Left colon (tissue), 2 donors: ENCODE measurements at regions of chr11 and their contacts with region 1.

Region 1: DNA sequence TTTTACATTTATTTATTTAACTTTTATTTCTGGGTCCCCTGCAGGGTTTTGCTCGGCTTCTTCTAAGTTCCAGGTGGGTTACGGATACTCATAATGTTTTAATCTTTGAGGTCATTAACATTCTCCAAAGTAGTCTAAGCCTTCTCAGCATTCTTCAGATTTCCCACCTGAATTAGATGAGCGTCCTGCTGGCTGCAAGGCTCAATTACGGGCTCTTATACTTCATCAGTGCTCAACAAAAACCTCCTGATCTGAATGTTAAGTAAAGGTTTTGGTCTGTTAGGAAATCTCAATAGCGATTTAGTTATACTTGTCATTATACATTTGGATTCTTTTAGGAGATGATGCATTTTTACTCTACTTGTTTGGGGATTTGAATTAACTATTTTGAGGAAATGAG is 27.3 kb upstream of the NFRKB start:
- DNase-seq: no peak
- ATAC-seq: no peak

Region 2: DNA sequence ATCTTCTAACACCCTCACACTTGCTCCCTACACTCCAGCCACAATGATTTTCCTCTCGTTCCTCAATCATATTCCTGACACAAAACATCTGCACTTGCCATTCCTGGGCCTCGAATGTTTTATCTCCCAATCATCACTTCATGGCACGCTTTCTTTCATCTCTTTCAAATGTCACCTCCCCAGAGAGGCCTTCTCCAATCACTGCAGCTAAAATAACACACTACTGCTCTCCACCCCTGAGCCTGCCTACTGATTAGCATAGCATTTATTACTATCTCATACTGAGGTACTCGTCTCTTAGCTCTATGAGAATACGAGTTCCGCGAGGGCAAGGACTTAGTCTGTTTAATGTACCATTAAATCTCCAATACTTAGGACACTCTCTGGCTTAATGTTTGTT is 50.8 kb before region 1 on chr11:
- intact Hi-C with region 1: no loop called
- DNase-seq: no peak
- ATAC-seq: no peak

Region 3: GRCh38 chr11:129937592-129938238 is 15.0 kb after region 1 on chr11:
- intact Hi-C with region 1: no loop called
- DNase-seq: no peak
- ATAC-seq: no peak

Region 4: DNA sequence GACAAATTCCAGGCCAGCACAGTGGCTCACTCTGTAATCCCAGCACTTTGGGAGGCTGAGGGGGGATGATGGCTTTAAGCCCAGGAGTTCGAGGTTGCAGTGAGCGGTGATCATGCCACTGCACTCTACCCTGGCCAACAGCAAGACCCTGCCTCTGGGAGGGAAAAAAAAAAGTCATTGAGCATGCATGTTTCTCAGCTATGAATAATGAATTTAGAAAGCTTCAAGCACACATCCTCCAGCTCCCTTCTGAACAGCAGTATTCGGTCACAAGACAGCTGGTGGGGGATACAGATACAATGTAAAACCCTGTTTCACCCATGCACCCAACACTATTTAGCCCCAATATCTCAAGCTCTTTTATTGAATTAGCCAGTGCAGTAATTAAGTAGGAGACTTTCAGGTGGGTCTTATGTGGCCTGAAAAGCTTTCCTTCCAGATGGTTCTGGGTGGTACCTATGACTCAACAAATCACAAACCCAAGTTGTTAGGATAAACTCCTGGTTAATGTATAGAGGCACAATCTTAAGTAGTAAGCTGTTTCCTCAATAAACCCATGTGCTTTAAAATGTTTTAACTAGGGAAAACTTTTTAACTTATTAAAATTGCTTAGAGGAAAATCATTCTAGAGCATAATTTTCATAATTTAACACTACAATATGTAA is 66.6 kb after region 1 on chr11:
- intact Hi-C with region 1: no loop called
- DNase-seq: no peak
- ATAC-seq: peak; percentile 69

Region 5: DNA sequence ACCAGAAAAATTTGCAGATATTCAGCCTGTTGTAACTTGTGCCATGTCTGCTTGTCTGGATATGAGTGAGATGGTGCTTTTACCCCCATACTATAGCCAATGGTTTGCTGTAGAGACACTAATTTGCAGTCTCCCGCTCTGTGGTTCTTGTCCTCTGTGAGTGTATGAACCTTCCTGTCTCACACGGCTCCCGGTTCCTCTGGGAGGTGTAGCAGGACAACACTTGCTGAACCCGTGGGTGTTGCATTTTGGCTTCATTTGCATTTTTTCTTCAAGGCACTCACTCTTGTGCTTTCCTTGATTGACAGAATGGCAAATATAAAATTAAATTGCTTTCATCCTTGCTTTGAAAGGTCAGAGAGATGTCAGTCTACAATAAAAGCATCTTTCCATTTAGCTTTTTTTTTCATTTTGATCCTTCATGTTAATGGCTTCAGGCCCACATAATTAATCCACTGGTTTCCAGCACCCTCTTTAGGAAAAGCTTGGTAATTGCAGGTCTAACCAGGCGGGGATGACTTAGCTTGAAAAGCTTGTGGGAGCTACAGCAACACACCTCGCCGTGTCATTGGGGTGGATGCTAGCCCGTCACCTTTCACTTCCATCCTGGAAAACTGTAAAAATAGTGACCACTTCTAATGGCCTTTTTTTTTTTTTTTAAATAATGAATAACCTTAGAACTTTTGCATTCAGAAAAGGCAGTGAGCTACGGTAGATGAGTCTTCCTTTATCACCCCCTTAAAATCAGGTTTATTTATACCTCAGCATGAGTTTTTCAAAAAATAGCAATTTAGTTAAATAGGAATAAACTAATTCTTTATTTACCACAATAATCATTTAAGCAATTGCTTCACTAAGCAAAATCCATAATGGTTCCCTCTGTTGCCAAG is 209.5 kb after region 1 on chr11:
- intact Hi-C with region 1: loop called (anchors 2 to 10 kb)
- DNase-seq: no peak
- ATAC-seq: peak; percentile 76